Activated CD4-positive, alpha-beta T cell treated with anti-CD3 and anti-CD28 coated beads for 36 hours (primary cell): ENCODE measurements at regions of chr6 and their contacts with region 1.

Region 1: DNA sequence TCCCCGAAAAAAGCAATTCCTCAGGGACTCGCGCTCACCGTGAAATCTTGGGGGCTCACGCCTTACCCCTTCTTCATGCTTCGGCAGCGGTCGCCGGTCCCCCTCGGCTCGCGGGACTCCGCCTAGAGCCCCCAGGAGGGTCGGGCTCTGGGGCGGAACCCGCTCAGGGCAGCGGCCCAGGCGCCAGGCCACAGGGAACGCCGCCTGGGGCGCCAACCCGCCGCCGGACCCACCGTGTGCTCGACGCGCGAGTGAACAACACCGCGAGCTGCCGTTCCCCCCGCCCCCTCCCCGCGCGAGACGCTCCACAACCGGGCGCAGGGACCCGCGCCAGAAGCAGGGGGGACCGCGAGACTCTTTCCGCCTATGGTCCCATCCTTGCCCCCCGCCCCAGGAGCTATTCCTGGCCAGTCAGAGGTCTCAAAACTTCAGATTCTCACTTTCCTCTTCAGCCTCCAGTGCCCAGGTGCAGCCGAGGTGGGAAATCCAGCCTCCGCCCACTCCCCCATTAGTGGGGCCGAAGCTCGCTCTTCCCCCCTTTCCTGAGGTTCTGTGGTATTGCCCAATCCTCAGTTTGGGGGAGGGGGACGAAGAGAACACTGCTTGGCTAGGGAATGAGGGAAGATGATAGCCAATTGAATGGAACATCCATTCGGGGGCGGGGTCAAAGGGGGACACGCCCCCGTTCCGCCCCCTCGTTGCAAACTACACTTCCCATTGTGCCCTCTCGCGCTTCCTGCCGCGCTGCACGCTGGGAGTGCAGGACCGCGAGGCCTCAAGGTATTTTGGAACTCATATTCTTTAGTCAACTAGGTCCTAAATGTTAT is at the start of gene WASF1:
- DNase-seq: peak; percentile 94
- ATAC-seq: peak; percentile 89
- H3K4me3 Mint-ChIP-seq: no peak within 1 kb of the TSS
- H3K27ac Mint-ChIP-seq: peak within 1 kb of the TSS; percentile 7
- H3K4me1 Mint-ChIP-seq: peaks cover 5% of the 10 kb centered on the region
- H3K27me3 Mint-ChIP-seq: peaks cover 10% of the 10 kb centered on the region
- total RNA-seq, gene WASF1: 4.2 to 4.6 TPM

Region 2: DNA sequence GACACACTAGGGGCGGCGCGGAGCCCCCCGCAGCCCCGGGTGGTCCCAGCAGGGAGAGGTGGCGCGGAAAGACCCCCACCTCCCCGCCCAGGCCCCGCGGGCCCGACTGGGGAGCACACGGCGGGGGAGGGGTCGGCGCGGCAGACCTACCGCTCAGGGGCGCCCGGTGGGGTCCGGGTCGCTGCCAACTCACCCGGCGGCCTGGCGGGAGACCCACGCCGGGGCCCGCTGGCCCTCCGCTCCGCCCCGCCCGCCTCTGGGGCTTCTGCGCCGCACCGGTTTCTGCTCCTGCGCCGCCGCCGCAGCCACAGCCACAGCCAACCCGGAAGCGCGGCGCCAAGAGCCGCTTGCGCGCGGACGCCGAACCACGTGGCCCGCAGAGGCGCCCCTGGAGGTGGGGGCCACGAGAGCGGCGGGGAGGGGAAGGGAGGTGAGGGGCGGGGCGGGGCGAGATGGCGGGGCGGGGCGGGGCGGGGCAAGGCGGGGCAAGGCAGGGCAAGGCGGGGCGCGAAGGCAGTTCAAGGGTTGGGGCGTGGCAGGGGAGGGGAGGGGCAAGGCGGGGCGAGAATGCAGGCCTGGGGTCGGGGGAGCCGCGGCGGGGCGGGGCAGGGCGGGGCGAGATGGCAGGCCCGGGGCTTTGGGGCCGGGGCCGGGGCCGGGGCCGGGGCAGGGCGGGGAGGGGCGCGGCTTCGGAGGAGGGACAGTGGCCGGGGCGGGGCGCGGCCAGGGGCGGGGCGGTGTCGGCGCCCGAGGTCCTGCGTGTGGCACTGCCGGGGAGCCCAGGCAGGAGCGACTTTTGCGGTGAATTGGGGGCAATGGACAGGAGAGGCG is 696.5 kb before region 1 on chr6 and contains the start of gene ZBTB24:
- CTCF ChIA-PET with region 1: no interaction called
- POLR2A ChIA-PET with region 1: no interaction called
- intact Hi-C with region 1: loop called in 1 of 2 experiments (anchors 1 kb)
- DNase-seq: peak; percentile 94
- ATAC-seq: peak; percentile 84
- H3K4me3 Mint-ChIP-seq: peak within 1 kb of the TSS; percentile 96
- H3K27ac Mint-ChIP-seq: peak within 1 kb of the TSS; percentile 94
- H3K4me1 Mint-ChIP-seq: peaks cover 43% of the 10 kb centered on the region
- H3K27me3 Mint-ChIP-seq: no peaks in the 10 kb centered on the region
- total RNA-seq, gene ZBTB24: 12.0 to 14.7 TPM

Region 3: GRCh38 chr6:109705258-109705657 is 474.4 kb before region 1 on chr6:
- CTCF ChIA-PET with region 1: no interaction called
- POLR2A ChIA-PET with region 1: no interaction called
- intact Hi-C with region 1: loop called in 1 of 2 experiments (anchors 1 kb)
- DNase-seq: peak; percentile 88
- ATAC-seq: peak; percentile 99
- H3K4me3 Mint-ChIP-seq: no peak overlapping the region
- H3K27ac Mint-ChIP-seq: no peak overlapping the region
- H3K4me1 Mint-ChIP-seq: peaks cover 12% of the 10 kb centered on the region
- H3K27me3 Mint-ChIP-seq: no peaks in the 10 kb centered on the region

Region 4: GRCh38 chr6:109816452-109817374 is 362.9 kb before region 1 on chr6:
- CTCF ChIA-PET with region 1: no interaction called
- POLR2A ChIA-PET with region 1: no interaction called
- intact Hi-C with region 1: no loop called
- DNase-seq: no peak
- ATAC-seq: no peak
- H3K4me3 Mint-ChIP-seq: no peak overlapping the region
- H3K27ac Mint-ChIP-seq: no peak overlapping the region
- H3K4me1 Mint-ChIP-seq: no peaks in the 10 kb centered on the region
- H3K27me3 Mint-ChIP-seq: no peaks in the 10 kb centered on the region

Region 5: DNA sequence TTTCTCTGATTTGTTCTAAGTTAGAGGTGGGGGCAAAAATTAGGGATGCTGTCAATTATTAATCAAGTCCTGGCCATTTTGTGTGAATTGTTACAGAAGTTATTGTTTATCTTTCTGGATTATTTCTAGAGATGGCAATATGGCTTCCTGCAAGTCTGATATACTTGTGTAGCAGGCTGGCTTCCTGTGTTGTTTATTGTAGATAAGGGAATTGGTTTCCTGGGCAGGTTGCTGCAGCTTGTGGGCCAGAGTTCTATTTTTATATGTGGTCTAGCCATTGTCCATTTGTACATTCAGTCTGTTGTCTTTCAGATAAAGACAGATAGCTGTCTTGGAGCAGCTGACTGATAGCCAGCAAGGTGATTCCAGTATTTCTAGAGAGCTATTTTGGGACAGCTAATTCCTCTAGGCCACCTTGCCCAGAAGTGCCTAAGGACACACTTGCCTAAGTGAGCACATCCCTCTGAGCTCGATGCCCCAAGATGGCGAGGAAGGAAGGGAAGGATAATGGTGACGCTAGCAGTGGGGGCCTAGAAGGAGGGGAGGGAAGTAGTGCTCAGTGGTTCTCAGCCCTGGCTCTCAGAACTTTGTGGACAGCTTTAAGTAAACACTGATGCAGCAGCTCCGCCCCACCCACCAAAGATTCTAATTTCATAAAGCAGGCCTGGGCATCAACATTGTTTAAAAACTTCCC is 210.2 kb after region 1 on chr6:
- CTCF ChIA-PET with region 1: interaction called, 7 read pairs
- POLR2A ChIA-PET with region 1: no interaction called
- intact Hi-C with region 1: loop called (anchors 1 kb)
- DNase-seq: no peak
- ATAC-seq: no peak
- H3K4me3 Mint-ChIP-seq: no peak overlapping the region
- H3K27ac Mint-ChIP-seq: no peak overlapping the region
- H3K4me1 Mint-ChIP-seq: peaks cover 19% of the 10 kb centered on the region
- H3K27me3 Mint-ChIP-seq: no peaks in the 10 kb centered on the region